Posterior cingulate gyrus (tissue), 11 donors: ENCODE measurements at regions of chr1 and their contacts with region 1.

Region 1: DNA sequence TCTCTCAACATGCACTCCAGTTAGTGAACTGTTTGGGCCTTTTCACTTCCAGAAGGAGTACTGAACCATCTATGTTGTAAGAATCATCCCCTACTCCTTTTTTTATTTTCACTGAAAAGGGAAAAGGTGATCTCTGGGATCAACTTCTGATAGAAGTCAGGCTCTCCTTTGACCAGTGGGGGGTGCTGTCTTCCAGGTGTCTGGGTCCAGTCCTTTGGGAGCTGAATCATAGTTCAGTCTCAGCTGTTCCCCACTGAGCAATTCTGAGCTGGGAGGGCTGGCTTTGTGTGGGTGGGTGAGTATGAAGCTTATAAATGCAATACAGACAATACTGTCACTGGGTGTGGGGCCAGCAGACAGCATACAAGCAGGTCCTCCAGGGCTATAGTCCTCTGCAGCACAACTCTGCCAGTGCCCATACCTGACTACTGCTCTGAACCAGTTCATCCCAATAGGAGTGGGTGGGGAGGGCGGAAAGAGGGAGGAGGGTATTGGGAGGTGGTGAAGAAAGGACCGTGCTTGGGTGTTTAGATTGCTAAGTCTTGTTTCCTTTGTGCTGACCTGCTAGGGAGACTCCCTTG is 12.5 kb upstream of the SARS1 start:
- DNase-seq: peak; percentile 26 to 95 (median 72)

Region 2: GRCh38 chr1:109263597-109264398 is 62.6 kb after region 1 on chr1:
- intact Hi-C with region 1: loop called (anchors 2 kb)
- DNase-seq: peak; percentile 24 to 96 (median 75)